ENCODE measurements at regions of chr16 and their contacts with region 1.

Region 1: DNA sequence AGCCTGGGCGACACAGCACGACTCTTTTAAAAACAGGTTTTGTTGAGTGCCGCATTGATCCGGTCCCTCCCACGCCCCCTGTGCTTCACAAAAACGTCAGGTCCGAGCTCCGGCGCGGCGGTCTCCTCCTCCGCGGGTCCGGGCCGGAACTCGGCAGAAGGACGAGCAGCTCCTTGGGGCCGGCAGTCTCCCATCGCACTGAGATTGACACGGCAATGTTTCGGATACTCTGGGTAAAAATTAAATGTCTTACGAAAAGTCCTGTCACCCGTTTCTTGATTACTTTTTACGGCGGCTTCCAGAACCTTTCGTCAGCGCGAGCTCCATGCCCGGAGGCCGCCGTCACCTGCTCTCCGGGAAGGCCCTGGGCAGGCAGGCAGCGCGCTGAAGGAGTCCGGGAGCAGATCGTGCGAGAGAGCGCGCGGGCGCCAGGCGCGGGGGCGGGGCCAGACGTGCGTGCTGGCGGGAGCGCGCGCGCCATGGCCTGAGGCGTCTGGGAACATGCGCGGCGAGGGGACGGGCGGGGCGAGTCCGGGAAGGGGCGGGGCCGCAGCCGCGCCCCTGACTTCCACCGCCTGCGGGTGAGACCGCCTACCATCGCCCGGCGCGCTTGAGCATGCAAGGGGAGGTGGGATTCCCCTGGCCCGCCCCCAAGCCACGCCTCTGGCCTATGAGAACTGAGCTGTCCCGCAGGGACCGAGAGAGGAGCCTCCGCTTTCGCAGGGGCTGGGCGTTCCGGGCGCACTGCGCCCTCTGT is 11.7 kb upstream of the SRL start:
- DNase-seq: peak; percentile 99
- H3K4me3 ChIP-seq: peak overlapping the region; percentile 50 to 81
- H3K27ac ChIP-seq: peak overlapping the region; percentile 73 to 79
- H3K4me1 ChIP-seq: no peaks in the 10 kb centered on the region
- H3K27me3 ChIP-seq: no peaks in the 10 kb centered on the region
- CTCF ChIP-seq: no peak
- EP300 ChIP-seq: peak in 1 of 2 experiments; percentile 52; a peak in 2 of 4 replicates
- RAD21 ChIP-seq: peak; percentile 90

Region 2: DNA sequence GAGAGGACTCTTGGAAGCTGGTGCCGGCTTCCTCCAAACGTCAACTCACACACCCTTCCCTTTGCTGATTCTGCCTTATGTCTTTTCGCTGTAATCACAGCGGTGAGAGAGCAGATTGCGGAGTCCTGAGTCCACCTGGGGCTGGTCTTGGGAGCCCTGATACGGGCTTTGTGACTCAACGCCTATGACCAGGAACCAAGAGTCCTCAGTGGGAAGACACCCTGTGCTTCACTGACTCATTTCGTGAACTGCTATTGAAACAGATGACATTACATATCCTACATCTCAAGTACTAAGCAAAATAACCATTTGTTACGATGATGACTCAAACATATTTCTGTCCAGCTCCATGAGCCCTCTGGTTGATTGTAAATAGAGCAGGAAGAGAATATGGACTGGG is 282.3 kb before region 1 on chr16:
- CTCF ChIA-PET with region 1: interaction called, 10 read pairs
- POLR2A ChIA-PET with region 1: no interaction called
- DNase-seq: no peak
- H3K4me3 ChIP-seq: no peak overlapping the region
- H3K27ac ChIP-seq: peak overlapping the region in 1 of 2 experiments; percentile 50; a peak in 1 of 4 replicates
- H3K4me1 ChIP-seq: peaks cover 0 to 2% of the 10 kb centered on the region in 2 experiments; a peak in 2 of 4 replicates
- H3K27me3 ChIP-seq: no peaks in the 10 kb centered on the region
- CTCF ChIP-seq: no peak
- EP300 ChIP-seq: no peak
- RAD21 ChIP-seq: no peak

Region 3: DNA sequence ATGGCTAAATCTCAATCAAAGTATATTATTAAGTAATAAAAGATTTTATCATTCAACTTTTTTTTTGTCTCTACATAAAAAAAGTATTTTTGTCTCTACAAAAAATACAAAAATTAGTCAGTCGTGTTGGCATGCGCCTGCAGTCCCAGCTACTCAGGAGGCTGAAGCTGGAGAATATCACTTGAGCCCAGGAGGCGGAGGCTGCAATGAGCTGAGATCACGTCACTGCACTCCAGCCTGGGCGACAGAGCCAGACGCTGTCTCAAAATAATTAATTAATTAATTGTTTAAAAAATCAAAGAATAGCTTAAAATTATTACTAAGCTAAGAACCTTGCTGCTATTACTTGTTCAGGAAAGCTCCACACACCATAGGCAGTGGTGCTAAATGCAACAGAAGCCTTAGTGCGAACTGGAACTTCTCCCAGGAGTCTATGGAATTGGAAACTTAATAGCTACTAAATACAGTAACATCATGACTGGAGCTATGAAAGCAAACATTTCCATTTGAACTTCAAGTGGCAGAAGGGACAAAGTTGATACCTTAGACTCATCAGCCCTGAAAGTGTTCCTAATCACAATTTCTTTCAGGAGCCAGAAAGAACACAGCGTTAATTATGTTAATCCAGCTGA is 160.0 kb before region 1 on chr16:
- CTCF ChIA-PET with region 1: interaction called, 10 read pairs
- POLR2A ChIA-PET with region 1: no interaction called
- DNase-seq: no peak
- H3K4me3 ChIP-seq: no peak overlapping the region
- H3K27ac ChIP-seq: no peak overlapping the region
- H3K4me1 ChIP-seq: peaks cover 4 to 10% of the 10 kb centered on the region in 2 experiments
- H3K27me3 ChIP-seq: no peaks in the 10 kb centered on the region
- CTCF ChIP-seq: no peak
- EP300 ChIP-seq: no peak
- RAD21 ChIP-seq: no peak

Region 4: GRCh38 chr16:4200000-4200780 is 53.4 kb before region 1 on chr16:
- CTCF ChIA-PET with region 1: interaction called, 98 read pairs
- POLR2A ChIA-PET with region 1: interaction called, 4 read pairs
- DNase-seq: peak; percentile 86
- H3K4me3 ChIP-seq: no peak overlapping the region
- H3K27ac ChIP-seq: no peak overlapping the region
- H3K4me1 ChIP-seq: peaks cover 2 to 4% of the 10 kb centered on the region in 2 experiments; a peak in 1 of 4 replicates
- H3K27me3 ChIP-seq: no peaks in the 10 kb centered on the region
- CTCF ChIP-seq: peak; percentile 82
- EP300 ChIP-seq: no peak
- RAD21 ChIP-seq: peak; percentile 90

Region 5: GRCh38 chr16:4239020-4239419 is 14.6 kb before region 1 on chr16:
- CTCF ChIA-PET with region 1: interaction called, 25 read pairs
- POLR2A ChIA-PET with region 1: interaction called, 3 read pairs
- DNase-seq: peak; percentile 60
- H3K4me3 ChIP-seq: no peak overlapping the region
- H3K27ac ChIP-seq: no peak overlapping the region
- H3K4me1 ChIP-seq: peaks cover 0 to 2% of the 10 kb centered on the region in 2 experiments; a peak in 1 of 4 replicates
- H3K27me3 ChIP-seq: no peaks in the 10 kb centered on the region
- CTCF ChIP-seq: no peak
- EP300 ChIP-seq: no peak
- RAD21 ChIP-seq: no peak

Region 6: GRCh38 chr16:4307215-4308037 is 53.9 kb after region 1 on chr16:
- CTCF ChIA-PET with region 1: interaction called, 11 read pairs
- POLR2A ChIA-PET with region 1: no interaction called
- DNase-seq: peak; percentile 99
- H3K4me3 ChIP-seq: peak overlapping the region; percentile 52 to 56
- H3K27ac ChIP-seq: peak overlapping the region; percentile 39 to 77; a peak in 3 of 4 replicates
- H3K4me1 ChIP-seq: peaks cover 0 to 16% of the 10 kb centered on the region in 2 experiments; a peak in 1 of 4 replicates
- H3K27me3 ChIP-seq: no peaks in the 10 kb centered on the region
- CTCF ChIP-seq: no peak
- EP300 ChIP-seq: no peak
- RAD21 ChIP-seq: no peak

Region 7: GRCh38 chr16:4402439-4403132 is 149.0 kb after region 1 on chr16:
- CTCF ChIA-PET with region 1: interaction called, 23 read pairs
- POLR2A ChIA-PET with region 1: no interaction called
- DNase-seq: peak; percentile 96
- H3K4me3 ChIP-seq: peak overlapping the region in 1 of 2 experiments; percentile 50; a peak in 1 of 4 replicates
- H3K27ac ChIP-seq: no peak overlapping the region; a peak in 1 of 4 replicates
- H3K4me1 ChIP-seq: peaks cover 0 to 11% of the 10 kb centered on the region in 2 experiments; a peak in 1 of 4 replicates
- H3K27me3 ChIP-seq: no peaks in the 10 kb centered on the region
- CTCF ChIP-seq: peak; percentile 93
- EP300 ChIP-seq: no peak
- RAD21 ChIP-seq: peak; percentile 93

Region 8: GRCh38 chr16:4461250-4462085 is 207.9 kb after region 1 on chr16:
- CTCF ChIA-PET with region 1: no interaction called
- POLR2A ChIA-PET with region 1: no interaction called
- DNase-seq: peak; percentile 70
- H3K4me3 ChIP-seq: no peak overlapping the region
- H3K27ac ChIP-seq: no peak overlapping the region
- H3K4me1 ChIP-seq: peaks cover 0 to 8% of the 10 kb centered on the region in 2 experiments; a peak in 1 of 4 replicates
- H3K27me3 ChIP-seq: no peaks in the 10 kb centered on the region
- CTCF ChIP-seq: no peak
- EP300 ChIP-seq: no peak
- RAD21 ChIP-seq: no peak